PC-3 (cell line): ENCODE measurements at regions of chr12 and their contacts with region 1.

Region 1: DNA sequence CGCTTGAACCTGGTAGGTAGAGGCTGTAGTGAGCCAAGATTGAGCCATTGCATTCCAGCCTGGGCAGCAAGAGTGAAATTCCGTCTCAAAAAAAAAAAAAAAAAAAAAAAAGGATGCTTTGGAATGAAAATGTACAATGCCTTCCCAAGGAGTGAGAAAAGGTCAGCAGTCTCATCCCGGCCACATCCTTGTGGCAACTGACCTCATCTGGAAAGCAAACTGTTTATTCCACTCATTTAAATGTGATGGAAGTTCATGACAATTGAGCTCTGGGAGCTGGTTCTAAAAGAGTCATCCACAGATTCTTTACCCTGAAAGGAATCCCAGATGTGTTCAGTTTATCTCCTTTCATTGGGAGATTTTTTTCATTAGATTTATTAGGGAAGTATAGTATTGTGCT is 19.4 kb upstream of the LIMA1 start:
- DNase-seq: peak; percentile 30
- ATAC-seq: peak; percentile 32; the same call in 1 of the 2 replicates
- H3K4me3 ChIP-seq: no peak overlapping the region
- H3K27ac ChIP-seq: no peak overlapping the region
- H3K4me1 ChIP-seq: peaks cover 20% of the 10 kb centered on the region
- H3K27me3 ChIP-seq: no peaks in the 10 kb centered on the region
- CTCF ChIP-seq: no peak

Region 2: GRCh38 chr12:50016501-50017475 is 285.9 kb before region 1 on chr12:
- CTCF ChIA-PET with region 1: no interaction called
- POLR2A ChIA-PET with region 1: no interaction called
- intact Hi-C with region 1: no loop called
- DNase-seq: no peak
- ATAC-seq: no peak
- H3K4me3 ChIP-seq: no peak overlapping the region
- H3K27ac ChIP-seq: no peak overlapping the region
- H3K4me1 ChIP-seq: no peaks in the 10 kb centered on the region; the same call in none of the 2 replicates
- H3K27me3 ChIP-seq: no peaks in the 10 kb centered on the region
- CTCF ChIP-seq: no peak

Region 3: GRCh38 chr12:50070314-50071060 is 232.2 kb before region 1 on chr12:
- CTCF ChIA-PET with region 1: no interaction called
- POLR2A ChIA-PET with region 1: no interaction called
- intact Hi-C with region 1: no loop called
- DNase-seq: peak; percentile 86
- ATAC-seq: peak; percentile 73
- H3K4me3 ChIP-seq: no peak overlapping the region
- H3K27ac ChIP-seq: no peak overlapping the region
- H3K4me1 ChIP-seq: peaks cover 3% of the 10 kb centered on the region
- H3K27me3 ChIP-seq: no peaks in the 10 kb centered on the region
- CTCF ChIP-seq: peak; percentile 93

Region 4: DNA sequence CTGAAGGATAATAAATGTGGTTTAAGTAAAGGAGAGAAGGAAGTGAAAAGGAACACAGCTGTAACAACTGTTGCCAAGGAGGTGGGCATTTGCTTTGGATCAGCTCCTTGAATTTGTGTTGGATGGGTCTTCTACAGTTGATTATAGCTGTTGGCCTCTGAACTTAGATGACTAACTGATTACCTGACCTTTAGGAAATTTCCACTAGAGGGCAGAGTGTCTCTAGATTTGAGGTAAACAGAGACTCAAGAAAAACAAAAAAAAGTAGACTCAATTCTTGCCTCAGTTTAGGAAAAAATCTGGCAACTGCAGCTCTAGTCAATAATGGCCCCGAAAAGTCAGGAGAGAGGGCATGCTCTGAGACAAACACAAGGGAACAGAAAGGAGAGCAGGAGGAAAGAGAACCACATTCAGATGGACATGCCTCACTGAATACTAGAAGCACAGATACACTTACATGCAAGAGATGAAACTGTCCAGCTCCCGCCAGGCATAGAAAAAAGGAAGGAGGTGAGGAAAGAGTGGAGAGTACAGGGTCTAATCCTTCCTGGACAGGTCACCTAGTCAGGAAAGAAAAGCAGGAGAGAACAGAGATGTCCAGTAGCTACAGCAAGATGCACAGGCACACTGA is 170.1 kb before region 1 on chr12:
- CTCF ChIA-PET with region 1: no interaction called
- POLR2A ChIA-PET with region 1: no interaction called
- intact Hi-C with region 1: no loop called
- DNase-seq: peak; percentile 69
- ATAC-seq: peak; percentile 61
- H3K4me3 ChIP-seq: no peak overlapping the region
- H3K27ac ChIP-seq: no peak overlapping the region
- H3K4me1 ChIP-seq: no peaks in the 10 kb centered on the region
- H3K27me3 ChIP-seq: no peaks in the 10 kb centered on the region
- CTCF ChIP-seq: peak; percentile 84

Region 5: DNA sequence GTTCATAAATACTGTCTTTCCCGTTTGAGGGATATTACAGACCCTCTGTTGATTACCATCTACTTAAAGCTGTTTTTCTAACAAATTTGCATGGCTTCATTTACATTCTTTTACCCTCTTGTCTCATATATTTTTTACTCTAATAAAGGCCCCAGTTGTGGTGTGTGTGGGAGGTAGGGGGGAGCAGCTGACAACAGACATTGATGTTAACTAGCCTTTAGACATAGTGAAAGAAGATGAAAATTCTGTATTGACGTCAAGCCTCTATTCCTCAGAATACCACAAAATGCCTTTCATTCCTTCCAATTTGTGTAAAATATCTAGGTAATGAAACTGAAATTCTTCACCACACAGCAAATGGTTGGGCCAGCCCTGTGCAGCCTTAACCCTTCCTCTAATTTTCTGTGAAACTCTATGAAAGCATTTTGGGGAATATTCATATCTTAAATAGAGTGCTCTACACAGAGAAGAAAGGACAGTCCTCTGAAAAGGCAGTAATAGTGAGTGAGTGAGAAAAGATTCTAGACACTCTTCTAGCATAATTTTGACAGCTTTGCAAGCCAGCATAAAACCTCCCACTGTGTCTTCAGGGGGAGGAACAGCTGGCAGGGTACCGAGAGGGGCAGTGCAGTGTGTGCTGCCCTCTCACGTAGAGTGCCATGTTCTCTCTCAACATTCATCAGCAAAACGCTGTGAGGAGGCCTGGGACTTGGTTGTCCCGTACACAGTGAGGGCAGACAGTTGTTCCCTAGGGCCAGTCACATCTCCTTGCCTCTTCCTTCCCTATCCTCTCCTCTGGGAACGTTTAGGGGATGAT is 115.4 kb before region 1 on chr12:
- CTCF ChIA-PET with region 1: no interaction called
- POLR2A ChIA-PET with region 1: no interaction called
- intact Hi-C with region 1: loop called (anchors 2 kb)
- DNase-seq: no peak
- ATAC-seq: no peak
- H3K4me3 ChIP-seq: no peak overlapping the region
- H3K27ac ChIP-seq: peak overlapping the region; percentile 2; the same call in 1 of the 2 replicates
- H3K4me1 ChIP-seq: peaks cover 26% of the 10 kb centered on the region
- H3K27me3 ChIP-seq: no peaks in the 10 kb centered on the region
- CTCF ChIP-seq: no peak

Region 6: DNA sequence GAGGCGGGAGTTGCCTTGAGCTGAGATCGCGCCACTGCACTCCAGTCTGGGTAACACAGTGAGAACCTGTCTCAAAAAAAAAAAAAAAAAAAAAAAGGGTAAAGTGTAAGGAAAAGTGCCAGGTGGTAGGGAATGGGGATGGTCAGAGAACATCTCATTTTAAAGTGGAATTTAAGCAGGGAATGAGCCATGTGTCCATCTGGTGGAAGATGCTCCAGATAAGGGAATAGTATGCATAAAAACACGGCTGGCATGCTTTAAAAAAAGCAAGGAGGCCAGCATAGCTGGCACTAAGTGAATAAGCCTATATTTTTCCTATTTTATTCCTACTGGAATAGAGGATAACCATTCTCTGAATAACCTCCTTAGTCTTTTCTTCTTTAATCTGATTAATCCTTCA is 60.0 kb after region 1 on chr12:
- CTCF ChIA-PET with region 1: no interaction called
- POLR2A ChIA-PET with region 1: no interaction called
- intact Hi-C with region 1: no loop called
- DNase-seq: no peak
- ATAC-seq: no peak
- H3K4me3 ChIP-seq: no peak overlapping the region
- H3K27ac ChIP-seq: no peak overlapping the region
- H3K4me1 ChIP-seq: no peaks in the 10 kb centered on the region
- H3K27me3 ChIP-seq: no peaks in the 10 kb centered on the region
- CTCF ChIP-seq: no peak